ENCODE measurements at regions of chr3 and their contacts with region 1.

Region 1: GRCh38 chr3:45343947-45344346 is 44.4 kb upstream of the LARS2 start:
- DNase-seq: no peak
- ATAC-seq: no peak

Region 2: DNA sequence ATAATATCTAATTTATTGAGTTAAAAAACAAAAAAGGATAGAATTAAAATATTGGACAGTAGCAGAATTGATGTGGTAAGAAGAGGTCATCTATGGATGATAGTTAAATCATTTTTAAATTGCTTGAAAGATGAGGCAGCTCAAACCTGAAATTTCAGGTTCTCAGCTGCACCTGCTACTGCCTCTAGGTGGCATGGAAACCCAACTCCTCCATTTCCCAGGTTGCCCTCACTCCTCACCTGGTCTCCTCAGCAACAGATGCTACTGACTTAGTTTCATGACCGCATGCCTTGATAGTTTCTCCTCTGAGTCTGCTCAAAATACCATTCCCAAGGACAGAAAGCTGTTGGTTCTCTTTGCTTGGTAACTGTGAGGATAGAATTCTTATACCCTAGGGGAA is 1505.1 kb before region 1 on chr3:
- intact Hi-C with region 1: loop called (anchors 5 kb)
- DNase-seq: no peak
- ATAC-seq: no peak

Region 3: DNA sequence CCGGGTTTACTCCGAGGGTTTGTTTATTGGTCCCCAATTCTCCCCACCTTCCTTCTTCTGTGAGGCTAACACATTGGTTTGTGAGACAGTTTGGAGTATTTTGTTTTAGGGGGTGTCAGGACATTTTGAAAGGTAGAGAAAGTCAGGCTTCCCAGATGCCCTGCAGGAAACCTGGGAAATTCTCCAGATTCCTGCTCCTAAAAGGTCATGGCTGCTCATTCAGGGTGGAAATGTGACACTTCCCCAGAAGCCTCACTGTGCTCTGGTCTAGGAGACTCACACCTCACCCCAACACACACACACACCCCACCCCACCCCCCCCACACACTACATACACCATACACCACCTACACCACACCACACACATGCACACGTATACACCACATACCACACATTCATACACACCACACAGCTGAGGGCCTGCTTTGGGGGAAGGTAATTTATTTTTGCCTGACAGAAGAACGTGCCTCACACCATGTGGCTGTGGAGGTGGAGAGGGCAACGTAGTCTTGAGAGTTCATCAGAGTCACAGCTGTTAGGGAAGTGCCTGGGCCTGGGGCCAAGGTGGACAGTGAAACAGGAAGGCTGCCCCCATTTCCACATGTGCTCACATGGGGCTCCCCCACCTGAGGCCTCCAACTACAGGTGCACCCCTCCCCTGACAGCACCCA is 210.2 kb after region 1 on chr3:
- intact Hi-C with region 1: no loop called
- DNase-seq: peak; percentile 75
- ATAC-seq: peak; percentile 23

Region 4: GRCh38 chr3:45741742-45742141 is 397.8 kb after region 1 on chr3:
- intact Hi-C with region 1: no loop called
- DNase-seq: no peak
- ATAC-seq: no peak

Measured in sciatic nerve (tissue), 2 donors.